Heart left ventricle (tissue), 16 donors: ENCODE measurements at regions of chrX and their contacts with region 1.

Region 1: GRCh38 chrX:40188573-40189432 is 91.0 kb upstream of the BCOR start:
- DNase-seq: no peak
- ATAC-seq: no peak
- H3K4me3 ChIP-seq: no peak overlapping the region
- H3K27ac ChIP-seq: no peak overlapping the region
- H3K4me1 ChIP-seq: no peaks in the 10 kb centered on the region
- H3K27me3 ChIP-seq: peaks cover 0 to 9% (median 0%) of the 10 kb centered on the region in 9 donors
- CTCF ChIP-seq: no peak
- POLR2A ChIP-seq: no peak

Region 2: GRCh38 chrX:39907964-39908616 is 280.7 kb before region 1 on chrX:
- intact Hi-C with region 1: no loop called
- DNase-seq: peak; percentile 44 to 76 (median 72)
- ATAC-seq: peak; percentile 80 to 93 (median 88)
- H3K4me3 ChIP-seq: no peak overlapping the region
- H3K27ac ChIP-seq: peak overlapping the region in 9 of 12 donors; percentile 27 to 66 (median 38)
- H3K4me1 ChIP-seq: peaks cover 0 to 29% (median 5%) of the 10 kb centered on the region in 12 donors
- H3K27me3 ChIP-seq: peaks cover 0 to 23% (median 0%) of the 10 kb centered on the region in 9 donors
- CTCF ChIP-seq: no peak
- POLR2A ChIP-seq: no peak

Region 3: DNA sequence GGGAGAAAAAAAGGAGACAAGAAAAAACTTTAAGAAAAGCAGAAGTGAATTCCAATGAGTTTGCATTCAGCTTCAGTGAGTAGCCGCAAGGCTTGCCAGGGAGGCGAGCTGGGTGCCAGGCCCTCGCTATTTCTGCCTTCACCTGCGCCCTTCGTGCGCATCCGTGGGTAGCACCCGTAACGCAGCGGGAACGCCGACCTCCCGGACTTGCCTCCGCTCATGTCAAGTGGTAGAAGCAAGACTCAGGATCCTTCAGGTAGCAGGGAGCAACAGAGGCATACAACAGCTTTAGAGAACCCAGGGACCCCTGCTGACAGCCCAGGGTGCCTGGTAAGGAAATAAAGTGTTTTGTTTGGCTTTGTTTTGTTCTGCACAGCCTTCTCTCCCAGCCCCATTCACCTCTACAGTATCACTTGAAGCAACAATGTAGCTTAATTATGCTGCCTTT is 49.0 kb after region 1 on chrX:
- intact Hi-C with region 1: loop called in 2 of 10 experiments (anchors 10 kb)
- DNase-seq: no peak
- ATAC-seq: no peak
- H3K4me3 ChIP-seq: no peak overlapping the region
- H3K27ac ChIP-seq: no peak overlapping the region
- H3K4me1 ChIP-seq: no peaks in the 10 kb centered on the region
- H3K27me3 ChIP-seq: peaks cover 0 to 5% (median 0%) of the 10 kb centered on the region in 9 donors
- CTCF ChIP-seq: no peak
- POLR2A ChIP-seq: no peak

Region 4: GRCh38 chrX:40253771-40254170 is 65.0 kb after region 1 on chrX:
- intact Hi-C with region 1: loop called in 2 of 10 experiments (anchors 10 kb)
- DNase-seq: no peak
- ATAC-seq: no peak
- H3K4me3 ChIP-seq: no peak overlapping the region
- H3K27ac ChIP-seq: no peak overlapping the region
- H3K4me1 ChIP-seq: no peaks in the 10 kb centered on the region
- H3K27me3 ChIP-seq: peaks cover 0 to 3% (median 0%) of the 10 kb centered on the region in 9 donors
- CTCF ChIP-seq: no peak
- POLR2A ChIP-seq: no peak